ENCODE measurements at regions of chrX and their contacts with region 1.

Region 1: DNA sequence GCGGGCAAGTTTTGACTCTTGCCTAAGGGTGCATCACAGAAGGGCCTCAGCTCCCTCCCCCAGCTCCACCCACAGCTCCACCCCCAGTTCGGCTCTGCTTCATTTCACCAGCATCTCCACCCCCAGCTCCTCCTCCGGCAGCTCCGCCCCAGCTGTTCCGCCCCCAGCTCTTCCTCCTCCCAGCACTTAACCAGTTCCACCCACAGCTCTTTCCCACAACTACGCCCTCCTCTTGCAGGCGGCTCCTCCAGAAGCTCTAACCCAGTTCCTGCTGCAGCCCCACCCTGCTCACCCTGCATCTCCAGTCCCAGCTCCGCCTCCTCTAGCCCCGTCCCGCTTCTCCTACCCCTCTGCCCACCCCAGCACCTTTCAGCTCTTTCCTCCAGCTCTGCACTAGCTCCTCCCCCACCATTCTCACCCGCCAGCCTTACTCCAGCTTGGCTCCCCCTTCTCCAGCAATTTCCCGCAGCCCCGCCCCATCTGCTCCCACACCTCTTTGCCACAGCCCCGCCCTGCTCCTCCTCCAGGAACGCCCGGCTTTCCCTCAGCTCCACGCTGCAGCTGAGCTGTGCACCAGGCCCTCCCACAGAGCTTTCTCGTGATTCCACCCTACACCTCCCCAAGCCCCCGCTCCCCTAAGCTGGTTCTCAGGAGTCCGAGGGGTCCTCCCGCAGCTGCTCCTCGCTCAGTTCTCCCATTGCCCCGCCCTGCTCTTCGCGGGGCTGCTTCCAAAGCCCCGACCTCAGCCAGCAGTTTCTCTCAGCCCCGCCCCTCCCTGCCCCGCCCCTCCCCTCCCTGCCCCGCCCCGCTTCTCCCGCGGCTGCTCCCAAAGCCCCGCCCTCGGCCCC is 1.3 kb upstream of the EOLA1 start:
- DNase-seq: peak; percentile 83
- ATAC-seq: peak; percentile 73
- H3K4me3 Mint-ChIP-seq: peak overlapping the region; percentile 80
- H3K27ac Mint-ChIP-seq: peak overlapping the region; percentile 82; the same call in 1 of the 2 replicates
- H3K4me1 Mint-ChIP-seq: peaks cover 8% of the 10 kb centered on the region; the same call in 1 of the 2 replicates
- H3K27me3 Mint-ChIP-seq: peaks cover 10% of the 10 kb centered on the region
- CTCF ChIP-seq: no peak

Region 2: DNA sequence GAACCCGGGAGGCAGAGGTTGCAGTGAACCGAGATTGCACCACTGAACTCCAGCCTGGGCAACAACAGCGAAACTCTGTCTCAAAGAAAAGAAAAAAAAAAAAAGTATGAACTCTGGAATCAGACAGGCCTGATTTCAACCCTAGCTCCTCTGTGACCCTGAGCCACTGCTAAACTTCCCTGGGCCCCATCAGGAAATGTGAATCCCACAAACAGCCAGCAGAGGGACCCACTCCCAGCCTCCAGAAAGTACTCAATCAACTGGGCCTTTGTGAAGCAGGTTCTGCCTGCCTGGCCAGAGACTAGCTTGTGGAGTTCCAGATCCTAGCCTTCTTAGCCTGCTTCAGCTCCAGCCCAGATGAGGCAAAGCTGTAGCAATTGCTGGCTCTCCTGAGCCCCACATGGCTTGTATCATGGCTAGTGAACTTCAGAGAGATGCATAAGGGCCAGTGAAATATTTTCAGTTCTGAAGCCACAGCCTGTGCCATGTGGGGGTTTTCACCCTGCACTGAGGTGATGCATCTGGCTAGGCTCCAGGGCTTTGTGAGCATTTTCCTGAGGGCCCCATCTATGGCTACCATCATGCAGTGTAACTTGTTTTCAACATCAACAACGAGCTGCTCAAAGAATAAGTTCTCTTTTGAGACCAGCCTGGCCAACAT is 27.2 kb before region 1 on chrX:
- CTCF ChIA-PET with region 1: interaction called, 33 read pairs
- POLR2A ChIA-PET with region 1: interaction called, 6 read pairs
- DNase-seq: peak; percentile 48
- ATAC-seq: peak; percentile 89
- H3K4me3 Mint-ChIP-seq: no peak overlapping the region
- H3K27ac Mint-ChIP-seq: no peak overlapping the region
- H3K4me1 Mint-ChIP-seq: peaks cover 3% of the 10 kb centered on the region; the same call in 1 of the 2 replicates
- H3K27me3 Mint-ChIP-seq: peaks cover 19% of the 10 kb centered on the region
- CTCF ChIP-seq: 0 out of 2 replicates have a peak, but pooled peaks have one; percentile 23

Region 3: DNA sequence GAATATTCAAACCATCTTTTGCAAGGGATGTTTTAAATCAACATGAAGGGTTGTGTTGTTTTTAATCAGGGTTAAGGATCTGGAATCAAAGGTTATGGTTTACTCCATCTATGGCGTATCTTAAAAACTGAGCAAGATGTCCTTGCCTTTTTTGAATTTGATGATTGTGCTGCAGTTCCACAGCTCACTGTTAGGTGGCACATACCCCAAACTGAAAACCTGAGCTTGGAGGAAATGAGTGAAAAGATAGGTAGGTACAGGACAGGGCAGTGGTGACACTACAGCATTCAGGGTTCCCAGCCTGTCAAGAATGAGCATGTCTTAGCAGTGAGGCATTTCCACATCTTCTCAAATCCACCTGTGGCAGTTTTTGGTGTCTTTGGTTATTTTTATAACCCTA is 11.8 kb before region 1 on chrX:
- CTCF ChIA-PET with region 1: interaction called, 16 read pairs
- POLR2A ChIA-PET with region 1: interaction called, 4 read pairs
- DNase-seq: no peak
- ATAC-seq: peak; percentile 49; the same call in 1 of the 2 replicates
- H3K4me3 Mint-ChIP-seq: no peak overlapping the region
- H3K27ac Mint-ChIP-seq: no peak overlapping the region
- H3K4me1 Mint-ChIP-seq: peaks cover 6% of the 10 kb centered on the region; the same call in 1 of the 2 replicates
- H3K27me3 Mint-ChIP-seq: no peaks in the 10 kb centered on the region; the same call in 1 of the 2 replicates
- CTCF ChIP-seq: peak; percentile 18; the same call in 1 of the 2 replicates

Measured in WTC11 (cell line).